ENCODE measurements at regions of chr5 and their contacts with region 1.

Region 1: GRCh38 chr5:79133657-79134451 is 22.2 kb downstream of the BHMT start:
- DNase-seq: peak; percentile 88
- H3K4me3 ChIP-seq: peak overlapping the region in 2 of 3 experiments; percentile 0 to 50
- H3K27ac ChIP-seq: peak overlapping the region; percentile 62
- H3K4me1 ChIP-seq: peaks cover 11% of the 10 kb centered on the region
- H3K27me3 ChIP-seq: peaks cover 2 to 3% of the 10 kb centered on the region in 2 experiments
- CTCF ChIP-seq: peak; percentile 69 to 78
- POLR2A ChIP-seq: no peak

Region 2: GRCh38 chr5:78467752-78468357 is 666.0 kb before region 1 on chr5:
- CTCF ChIA-PET with region 1: interaction called, 11 read pairs
- POLR2A ChIA-PET with region 1: no interaction called
- dilution Hi-C with region 1: no loop called
- intact Hi-C with region 1: loop called (anchors 5 kb)
- DNase-seq: peak; percentile 67
- H3K4me3 ChIP-seq: no peak overlapping the region
- H3K27ac ChIP-seq: no peak overlapping the region
- H3K4me1 ChIP-seq: peaks cover 2% of the 10 kb centered on the region
- H3K27me3 ChIP-seq: no peaks in the 10 kb centered on the region
- CTCF ChIP-seq: peak; percentile 50 to 59
- POLR2A ChIP-seq: no peak

Region 3: DNA sequence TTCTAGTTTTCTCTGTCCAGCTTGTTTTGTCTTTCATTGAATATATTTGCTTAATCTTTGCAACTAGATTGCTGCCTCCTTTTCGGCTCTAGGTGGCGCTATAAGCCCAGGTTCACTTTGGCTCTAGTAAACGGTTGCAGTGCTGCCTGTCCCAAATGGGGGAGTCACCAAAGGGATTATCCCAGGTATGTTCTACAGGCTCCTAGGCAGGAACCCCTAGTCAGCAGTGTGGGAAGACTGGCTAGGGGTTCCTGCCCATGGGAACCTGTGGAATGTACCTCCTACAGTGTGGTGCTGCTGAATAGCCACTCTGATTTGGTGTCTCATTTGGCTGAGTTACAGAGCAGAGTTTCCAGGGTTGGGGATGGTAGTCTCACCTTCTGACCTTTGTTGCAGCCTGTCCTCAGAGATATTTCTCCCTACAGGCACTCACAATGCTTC is 233.9 kb before region 1 on chr5:
- CTCF ChIA-PET with region 1: interaction called, 113 read pairs
- POLR2A ChIA-PET with region 1: no interaction called
- dilution Hi-C with region 1: no loop called
- intact Hi-C with region 1: loop called (anchors 1 kb)
- DNase-seq: peak; percentile 69
- H3K4me3 ChIP-seq: no peak overlapping the region
- H3K27ac ChIP-seq: no peak overlapping the region
- H3K4me1 ChIP-seq: no peaks in the 10 kb centered on the region
- H3K27me3 ChIP-seq: no peaks in the 10 kb centered on the region
- CTCF ChIP-seq: peak; percentile 78 to 82
- POLR2A ChIP-seq: no peak

Region 4: GRCh38 chr5:79109527-79110492 is 24.0 kb before region 1 on chr5:
- CTCF ChIA-PET with region 1: interaction called, 25 read pairs
- POLR2A ChIA-PET with region 1: no interaction called
- dilution Hi-C with region 1: no loop called
- intact Hi-C with region 1: no loop called
- DNase-seq: no peak
- H3K4me3 ChIP-seq: no peak overlapping the region
- H3K27ac ChIP-seq: no peak overlapping the region
- H3K4me1 ChIP-seq: no peaks in the 10 kb centered on the region
- H3K27me3 ChIP-seq: peaks cover 27 to 43% of the 10 kb centered on the region in 2 experiments
- CTCF ChIP-seq: peak; percentile 19 to 22
- POLR2A ChIP-seq: no peak

Region 5: GRCh38 chr5:79200573-79201183 is 66.8 kb after region 1 on chr5:
- CTCF ChIA-PET with region 1: interaction called, 15 read pairs
- POLR2A ChIA-PET with region 1: no interaction called
- dilution Hi-C with region 1: no loop called
- intact Hi-C with region 1: no loop called
- DNase-seq: no peak
- H3K4me3 ChIP-seq: no peak overlapping the region
- H3K27ac ChIP-seq: no peak overlapping the region
- H3K4me1 ChIP-seq: peaks cover 14% of the 10 kb centered on the region
- H3K27me3 ChIP-seq: no peaks in the 10 kb centered on the region
- CTCF ChIP-seq: peak; percentile 19 to 27
- POLR2A ChIP-seq: no peak

Region 6: GRCh38 chr5:79464695-79465332 is 331.0 kb after region 1 on chr5:
- CTCF ChIA-PET with region 1: interaction called, 123 read pairs
- POLR2A ChIA-PET with region 1: no interaction called
- dilution Hi-C with region 1: no loop called
- intact Hi-C with region 1: loop called (anchors 1 kb)
- DNase-seq: peak; percentile 38
- H3K4me3 ChIP-seq: no peak overlapping the region
- H3K27ac ChIP-seq: no peak overlapping the region
- H3K4me1 ChIP-seq: no peaks in the 10 kb centered on the region
- H3K27me3 ChIP-seq: no peaks in the 10 kb centered on the region
- CTCF ChIP-seq: peak; percentile 32 to 43
- POLR2A ChIP-seq: no peak